A549 (cell line): ENCODE measurements at regions of chr20 and their contacts with region 1.

Region 1: DNA sequence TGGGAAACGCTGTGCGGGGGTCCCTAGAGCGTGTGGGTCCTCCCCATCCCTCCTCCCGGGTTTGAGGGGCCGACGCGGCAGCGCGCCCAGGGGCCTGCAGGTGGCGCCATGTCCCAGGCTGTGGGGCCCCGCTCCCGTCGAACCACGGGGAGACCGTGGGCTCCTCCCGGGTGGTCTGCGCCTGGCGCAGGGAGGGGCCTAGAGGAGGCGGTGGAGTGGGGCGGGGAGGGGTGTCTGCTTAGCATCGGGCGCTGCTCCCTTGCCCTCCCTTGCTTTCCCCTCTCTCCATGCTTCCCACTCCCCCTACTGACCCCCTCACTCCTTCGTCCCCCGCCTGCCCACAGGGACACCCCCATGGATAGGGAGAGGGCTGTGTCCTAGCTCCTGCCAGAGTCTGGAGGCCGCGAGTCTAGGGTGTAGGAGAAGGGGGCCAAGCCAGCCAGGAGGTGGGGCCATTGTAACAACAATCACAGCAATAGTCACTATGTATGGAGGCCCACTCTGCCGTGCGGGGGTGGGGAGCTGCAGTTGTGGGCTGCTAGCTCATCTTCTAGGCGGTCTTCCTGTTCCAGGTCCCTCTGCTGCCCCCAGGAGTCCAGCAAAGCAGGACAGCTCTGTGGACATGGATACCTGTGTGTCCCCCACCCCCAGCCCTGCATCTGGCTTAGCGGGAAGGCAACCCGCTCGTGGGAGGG is 51.7 kb downstream of the CHMP4B start:
- DNase-seq: peak; percentile 32 to 55
- ATAC-seq: peak; percentile 52 to 79; a peak in 5 of 6 replicates
- H3K4me3 ChIP-seq: no peak overlapping the region
- H3K27ac ChIP-seq: peak overlapping the region; percentile 14 to 52; a peak in 3 of 6 replicates
- H3K4me1 ChIP-seq: peaks cover 18% of the 10 kb centered on the region
- CTCF ChIP-seq: peak; percentile 57
- EP300 ChIP-seq: no peak
- POLR2A ChIP-seq: no peak
- RAD21 ChIP-seq: peak; percentile 64 to 76

Region 2: GRCh38 chr20:33875055-33875454 is 12.2 kb after region 1 on chr20:
- CTCF ChIA-PET with region 1: interaction called, 15 read pairs
- POLR2A ChIA-PET with region 1: no interaction called
- DNase-seq: no peak
- ATAC-seq: no peak; a peak in 1 of 6 replicates
- H3K4me3 ChIP-seq: no peak overlapping the region
- H3K27ac ChIP-seq: no peak overlapping the region
- H3K4me1 ChIP-seq: no peaks in the 10 kb centered on the region
- CTCF ChIP-seq: no peak
- EP300 ChIP-seq: no peak
- POLR2A ChIP-seq: no peak
- RAD21 ChIP-seq: no peak